Mammary epithelial cell (primary cell): ENCODE measurements at regions of chr3 and their contacts with region 1.

Region 1: DNA sequence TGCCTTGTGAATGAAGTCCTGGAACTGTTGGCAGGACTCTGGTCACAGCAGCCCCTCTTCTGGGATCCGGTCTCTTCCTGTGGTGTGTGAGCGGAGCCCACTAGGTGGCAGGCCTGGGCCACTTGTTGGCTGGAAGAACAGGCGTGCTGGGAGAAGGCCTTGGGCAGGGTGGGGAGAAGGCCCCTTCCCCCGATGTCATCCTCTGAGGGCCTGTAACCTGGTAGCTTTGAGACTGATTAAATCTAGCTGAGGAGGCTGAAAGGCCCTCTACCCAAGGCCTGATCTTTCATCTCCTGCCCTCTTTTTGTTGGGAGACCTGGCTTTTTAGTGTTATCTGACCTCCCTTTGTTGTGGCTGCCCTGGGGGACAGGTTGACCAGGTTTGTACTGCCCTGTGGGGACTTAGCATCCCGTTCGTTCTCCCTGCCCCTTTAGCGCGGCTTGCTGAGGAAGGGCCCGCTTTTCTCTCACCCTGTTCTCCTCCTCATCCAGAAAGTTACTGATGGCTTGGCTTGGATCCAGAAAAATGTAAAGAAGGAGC is 48.3 kb downstream of the CHCHD6 start:
- DNase-seq: peak; percentile 61
- H3K4me3 ChIP-seq: no peak overlapping the region
- H3K27ac ChIP-seq: peak overlapping the region; percentile 78
- H3K4me1 ChIP-seq: peaks cover 34% of the 10 kb centered on the region
- H3K27me3 ChIP-seq: no peaks in the 10 kb centered on the region
- CTCF ChIP-seq: peak; percentile 88 to 98

Region 2: GRCh38 chr3:126858887-126859286 is 106.5 kb after region 1 on chr3:
- CTCF ChIA-PET with region 1: no interaction called
- dilution Hi-C with region 1: no loop called
- in situ Hi-C with region 1: no loop called
- intact Hi-C with region 1: loop called (anchors 1 kb)
- DNase-seq: peak; percentile 97
- H3K4me3 ChIP-seq: no peak overlapping the region
- H3K27ac ChIP-seq: peak overlapping the region; percentile 36
- H3K4me1 ChIP-seq: peaks cover 20% of the 10 kb centered on the region
- H3K27me3 ChIP-seq: no peaks in the 10 kb centered on the region
- CTCF ChIP-seq: no peak

Region 3: GRCh38 chr3:126956866-126957650 is 204.7 kb after region 1 on chr3:
- CTCF ChIA-PET with region 1: no interaction called
- dilution Hi-C with region 1: no loop called
- in situ Hi-C with region 1: no loop called
- intact Hi-C with region 1: loop called (anchors 1 kb)
- DNase-seq: peak; percentile 90
- H3K4me3 ChIP-seq: no peak overlapping the region
- H3K27ac ChIP-seq: no peak overlapping the region
- H3K4me1 ChIP-seq: peaks cover 37% of the 10 kb centered on the region
- H3K27me3 ChIP-seq: no peaks in the 10 kb centered on the region
- CTCF ChIP-seq: peak; percentile 50 to 71

Region 4: GRCh38 chr3:127002195-127003174 is 250.1 kb after region 1 on chr3:
- CTCF ChIA-PET with region 1: interaction called, 3 read pairs
- dilution Hi-C with region 1: no loop called
- in situ Hi-C with region 1: no loop called
- intact Hi-C with region 1: loop called (anchors 1 kb)
- DNase-seq: peak; percentile 82
- H3K4me3 ChIP-seq: peak overlapping the region in 2 of 3 experiments; percentile 18 to 20
- H3K27ac ChIP-seq: peak overlapping the region; percentile 42
- H3K4me1 ChIP-seq: peaks cover 63% of the 10 kb centered on the region
- H3K27me3 ChIP-seq: no peaks in the 10 kb centered on the region
- CTCF ChIP-seq: peak; percentile 45 to 64

Region 5: DNA sequence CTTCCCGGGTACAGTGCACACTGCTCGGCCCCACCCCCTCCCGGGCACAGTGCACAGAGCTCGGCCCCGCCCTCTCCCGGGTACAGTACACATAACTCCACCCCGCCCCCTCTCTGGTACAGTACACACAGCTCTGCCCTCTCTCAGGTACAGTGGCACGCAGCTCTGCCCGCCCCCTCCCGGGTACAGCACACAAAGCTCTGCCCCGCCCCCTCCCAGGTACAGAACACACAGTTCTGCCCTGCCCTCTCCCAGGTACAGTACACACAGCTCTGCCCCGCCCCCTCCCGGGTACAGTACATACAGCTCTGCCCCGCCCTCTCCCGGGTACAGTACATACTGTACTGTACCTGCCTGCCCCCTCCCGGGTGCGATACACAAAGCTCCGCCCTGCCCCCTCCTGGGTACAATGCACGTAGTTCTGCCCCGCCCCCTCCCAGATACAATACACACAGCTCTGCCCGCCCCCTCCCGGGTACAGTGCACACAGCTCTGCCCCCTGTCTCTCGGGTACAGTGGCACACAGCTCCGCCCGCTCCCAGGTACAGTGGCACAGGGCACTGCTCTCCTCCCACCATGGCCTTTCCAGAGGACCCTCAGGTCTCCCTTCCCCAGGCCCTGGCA is 551.9 kb after region 1 on chr3:
- CTCF ChIA-PET with region 1: interaction called, 4 read pairs
- dilution Hi-C with region 1: no loop called
- in situ Hi-C with region 1: no loop called
- intact Hi-C with region 1: loop called (anchors 1 kb)
- DNase-seq: peak; percentile 82
- H3K4me3 ChIP-seq: no peak overlapping the region
- H3K27ac ChIP-seq: peak overlapping the region; percentile 50
- H3K4me1 ChIP-seq: peaks cover 22% of the 10 kb centered on the region
- H3K27me3 ChIP-seq: no peaks in the 10 kb centered on the region
- CTCF ChIP-seq: peak in 1 of 2 donors; percentile 41

Region 6: DNA sequence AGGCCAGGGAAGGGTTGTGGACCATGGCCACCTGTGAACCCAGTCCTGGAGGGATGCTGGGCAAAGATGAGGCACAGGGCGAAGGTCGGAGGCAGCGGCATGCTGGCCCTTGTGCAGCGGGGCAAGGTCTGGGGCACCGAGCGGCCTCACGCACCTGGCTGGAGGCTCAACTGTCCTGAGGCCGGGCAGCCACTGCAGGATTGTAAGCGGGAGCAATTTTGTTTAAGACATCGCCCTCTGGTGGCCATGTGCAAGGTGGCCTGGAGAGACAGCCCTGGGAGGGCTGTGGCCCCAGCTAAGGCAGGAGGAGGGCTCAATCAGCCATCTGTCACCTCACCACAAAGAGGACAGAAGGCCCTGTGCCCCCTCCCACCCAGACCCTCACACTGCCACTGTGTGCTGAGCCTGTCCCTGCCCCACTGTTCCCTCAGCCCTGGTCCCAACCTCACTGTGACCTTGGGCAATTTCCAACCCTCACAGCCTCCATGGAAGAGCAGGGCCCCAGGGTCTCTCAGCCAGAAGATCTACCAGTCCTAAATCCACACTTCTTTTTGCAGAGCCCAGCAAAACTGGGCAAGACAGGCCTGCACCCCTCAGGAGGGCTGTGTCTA is 791.9 kb after region 1 on chr3:
- CTCF ChIA-PET with region 1: interaction called, 6 read pairs
- dilution Hi-C with region 1: no loop called
- in situ Hi-C with region 1: no loop called
- intact Hi-C with region 1: loop called (anchors 1 kb)
- DNase-seq: peak; percentile 43
- H3K4me3 ChIP-seq: no peak overlapping the region
- H3K27ac ChIP-seq: no peak overlapping the region
- H3K4me1 ChIP-seq: peaks cover 5% of the 10 kb centered on the region
- H3K27me3 ChIP-seq: no peaks in the 10 kb centered on the region
- CTCF ChIP-seq: peak; percentile 79 to 89